ENCODE measurements at regions of chr10 and their contacts with region 1.

Region 1: GRCh38 chr10:114821293-114821914 is at the start of gene FHIP2A:
- DNase-seq: peak; percentile 82
- H3K4me3 Mint-ChIP-seq: peak within 1 kb of the TSS; percentile 94
- H3K27ac Mint-ChIP-seq: peak within 1 kb of the TSS; percentile 93
- H3K4me1 Mint-ChIP-seq: peaks cover 33% of the 10 kb centered on the region
- H3K27me3 Mint-ChIP-seq: peaks cover 8% of the 10 kb centered on the region
- total RNA-seq, gene FHIP2A: 25.0 and 29.0 TPM in 2 replicates

Region 2: GRCh38 chr10:113854011-113854760 is 967.2 kb before region 1 on chr10 and contains the starts of genes DCLRE1A and NHLRC2:
- intact Hi-C with region 1: loop called (anchors 5 kb)
- DNase-seq: peak; percentile 45
- H3K4me3 Mint-ChIP-seq: peak within 1 kb of the TSS; percentile 98
- H3K27ac Mint-ChIP-seq: peak within 1 kb of the TSS; percentile 93
- H3K4me1 Mint-ChIP-seq: peaks cover 51% of the 10 kb centered on the region
- H3K27me3 Mint-ChIP-seq: no peaks in the 10 kb centered on the region
- total RNA-seq, gene DCLRE1A: 14.4 and 16.0 TPM in 2 replicates
- total RNA-seq, gene NHLRC2: 28.2 and 28.9 TPM in 2 replicates

Region 3: GRCh38 chr10:114499630-114500190 is 321.7 kb before region 1 on chr10:
- intact Hi-C with region 1: loop called (anchors 2 kb)
- DNase-seq: peak; percentile 59
- H3K4me3 Mint-ChIP-seq: peak overlapping the region; percentile 63
- H3K27ac Mint-ChIP-seq: peak overlapping the region; percentile 85
- H3K4me1 Mint-ChIP-seq: peaks cover 81% of the 10 kb centered on the region
- H3K27me3 Mint-ChIP-seq: no peaks in the 10 kb centered on the region

Region 4: GRCh38 chr10:114541081-114541796 is 280.2 kb before region 1 on chr10:
- intact Hi-C with region 1: loop called (anchors 1 kb)
- DNase-seq: peak; percentile 74
- H3K4me3 Mint-ChIP-seq: peak overlapping the region; percentile 61
- H3K27ac Mint-ChIP-seq: peak overlapping the region; percentile 90
- H3K4me1 Mint-ChIP-seq: peaks cover 82% of the 10 kb centered on the region
- H3K27me3 Mint-ChIP-seq: no peaks in the 10 kb centered on the region

Region 5: DNA sequence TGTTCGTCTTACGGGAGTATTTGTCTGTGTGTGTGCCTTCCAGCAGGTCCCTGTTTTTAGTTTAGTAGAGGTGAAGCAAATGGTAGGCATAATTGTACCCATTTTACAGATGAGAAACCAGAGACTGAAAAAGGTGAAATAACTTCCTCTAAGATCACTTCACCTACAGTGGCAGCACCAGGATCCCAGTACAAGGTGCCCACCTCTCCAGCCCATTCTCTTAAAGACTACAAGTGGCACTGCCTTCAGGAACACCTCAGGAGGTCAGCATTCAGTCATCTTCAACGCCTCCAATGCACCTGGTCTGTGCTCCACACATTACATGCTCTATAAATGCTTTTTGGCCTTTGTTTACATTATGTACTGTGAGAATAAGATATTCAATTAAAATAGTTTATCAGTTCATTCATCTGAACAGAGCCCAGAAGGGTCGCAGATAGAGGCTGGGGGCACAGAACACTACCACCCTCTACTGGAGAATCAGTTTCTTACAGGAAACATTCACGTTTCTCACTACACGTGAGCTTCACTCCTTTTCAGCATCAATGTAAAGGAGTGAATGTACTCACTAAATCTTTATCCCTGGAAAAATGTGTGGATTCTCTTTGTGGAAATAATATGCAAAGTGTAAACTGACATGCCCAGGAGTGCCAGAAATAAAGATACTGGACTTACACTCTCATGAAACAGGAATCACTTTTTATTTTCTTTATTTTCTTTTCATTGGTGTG is 117.9 kb before region 1 on chr10:
- intact Hi-C with region 1: loop called (anchors 5 kb)
- DNase-seq: no peak
- H3K4me3 Mint-ChIP-seq: no peak overlapping the region
- H3K27ac Mint-ChIP-seq: no peak overlapping the region
- H3K4me1 Mint-ChIP-seq: no peaks in the 10 kb centered on the region
- H3K27me3 Mint-ChIP-seq: peaks cover 28% of the 10 kb centered on the region

Region 6: GRCh38 chr10:114749014-114749413 is 72.4 kb before region 1 on chr10:
- intact Hi-C with region 1: no loop called
- DNase-seq: no peak
- H3K4me3 Mint-ChIP-seq: no peak overlapping the region
- H3K27ac Mint-ChIP-seq: no peak overlapping the region
- H3K4me1 Mint-ChIP-seq: no peaks in the 10 kb centered on the region
- H3K27me3 Mint-ChIP-seq: peaks cover 24% of the 10 kb centered on the region

Region 7: GRCh38 chr10:114810926-114811325 is 10.5 kb before region 1 on chr10:
- intact Hi-C with region 1: loop called (anchors 1 kb)
- DNase-seq: no peak
- H3K4me3 Mint-ChIP-seq: peak overlapping the region; percentile 28
- H3K27ac Mint-ChIP-seq: peak overlapping the region; percentile 42
- H3K4me1 Mint-ChIP-seq: peaks cover 23% of the 10 kb centered on the region
- H3K27me3 Mint-ChIP-seq: no peaks in the 10 kb centered on the region

Region 8: DNA sequence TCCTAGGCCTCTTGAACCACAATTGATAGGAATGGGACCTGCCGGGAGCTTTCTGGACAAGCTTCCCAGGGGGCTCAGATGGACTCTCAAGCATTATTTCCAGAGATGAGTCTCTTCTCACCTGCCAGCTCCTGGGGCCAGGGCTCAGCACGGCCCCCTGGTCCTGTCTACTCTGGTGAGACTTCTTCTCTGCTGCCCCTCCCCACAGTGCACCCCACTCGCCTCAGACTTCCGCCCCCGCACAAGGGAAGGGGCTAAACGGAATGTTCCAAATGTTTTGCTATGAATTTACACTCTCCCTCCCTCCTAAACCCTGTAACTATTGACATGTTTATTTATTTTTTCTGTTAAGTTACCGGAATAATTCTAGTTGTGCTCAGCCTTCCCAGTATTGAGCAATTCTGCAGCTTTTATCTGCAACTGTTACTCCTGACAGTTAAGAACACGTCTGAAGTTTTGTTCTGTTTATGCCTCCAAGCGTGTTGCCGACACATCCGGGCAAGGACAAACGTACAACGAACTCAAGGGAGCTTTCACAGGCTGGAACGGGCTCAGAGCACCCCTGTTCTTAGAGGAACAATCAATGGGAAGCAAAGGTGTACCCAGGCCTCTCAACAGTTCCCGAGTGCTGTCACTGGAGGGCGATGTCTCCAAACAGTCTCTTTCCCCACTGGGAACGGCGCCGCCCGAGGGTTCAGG is 55.3 kb after region 1 on chr10:
- intact Hi-C with region 1: loop called (anchors 2 kb)
- DNase-seq: peak; percentile 15
- H3K4me3 Mint-ChIP-seq: no peak overlapping the region
- H3K27ac Mint-ChIP-seq: no peak overlapping the region
- H3K4me1 Mint-ChIP-seq: peaks cover 32% of the 10 kb centered on the region
- H3K27me3 Mint-ChIP-seq: peaks cover 21% of the 10 kb centered on the region

Measured in activated T-helper 1 cell treated with anti-CD3 and anti-CD28 coated beads, Interleukin-12 subunit alpha, Interleukin-12 subunit beta, Interleukin-2, Interleukin-4 antibody, amounts not matched to agents 30 ng/mL and 10 ng/mL and 1 ng/mL, durations not matched to agents 14 hours and 24 hours and 36 hours (primary cell).